RWPE1 (cell line): ENCODE measurements at regions of chr19 and their contacts with region 1.

Region 1: GRCh38 chr19:5809053-5809452 is 4.2 kb downstream of the NRTN start:
- DNase-seq: no peak
- H3K27ac ChIP-seq: peak overlapping the region; percentile 62
- CTCF ChIP-seq: no peak

Region 2: DNA sequence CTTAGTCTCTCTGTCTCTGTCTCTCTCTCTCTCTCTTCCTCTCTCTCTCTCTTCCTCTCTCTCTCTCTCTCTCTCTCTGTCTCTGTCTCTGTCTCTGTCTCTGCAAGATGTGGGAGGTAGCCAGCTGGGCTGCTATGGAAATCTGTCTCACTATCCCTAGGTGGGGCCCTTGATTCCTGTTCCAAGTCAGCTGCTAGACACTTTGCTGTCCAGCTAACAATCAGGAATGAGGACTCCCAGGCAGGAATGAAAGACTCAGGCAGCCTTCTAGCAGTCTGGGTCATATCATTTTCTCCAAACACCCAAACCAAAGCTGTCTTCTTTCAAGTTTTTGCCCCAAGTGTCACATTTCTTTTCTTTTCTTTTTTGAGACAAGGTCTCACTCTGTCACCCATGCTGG is 65.4 kb before region 1 on chr19:
- CTCF ChIA-PET with region 1: no interaction called
- POLR2A ChIA-PET with region 1: interaction called, 28 read pairs
- DNase-seq: no peak
- H3K27ac ChIP-seq: no peak overlapping the region
- CTCF ChIP-seq: no peak

Region 3: GRCh38 chr19:5857203-5858081 is 48.4 kb after region 1 on chr19:
- CTCF ChIA-PET with region 1: no interaction called
- POLR2A ChIA-PET with region 1: no interaction called
- DNase-seq: no peak
- H3K27ac ChIP-seq: no peak overlapping the region
- CTCF ChIP-seq: no peak